ENCODE measurements at regions of chr1 and their contacts with region 1.

Region 1: GRCh38 chr1:31476891-31477828 is 64.1 kb downstream of the SERINC2 start:
- DNase-seq: peak; percentile 77
- ATAC-seq: peak; percentile 89
- H3K4me3 ChIP-seq: no peak overlapping the region
- H3K27ac ChIP-seq: no peak overlapping the region
- H3K4me1 ChIP-seq: no peaks in the 10 kb centered on the region
- H3K27me3 ChIP-seq: no peaks in the 10 kb centered on the region
- CTCF ChIP-seq: no peak
- EP300 ChIP-seq: 0 out of 4 replicates have a peak, but pooled peaks of 1 of the 2 experiments have one; percentile 23
- POLR2A ChIP-seq: no peak
- RAD21 ChIP-seq: no peak

Region 2: DNA sequence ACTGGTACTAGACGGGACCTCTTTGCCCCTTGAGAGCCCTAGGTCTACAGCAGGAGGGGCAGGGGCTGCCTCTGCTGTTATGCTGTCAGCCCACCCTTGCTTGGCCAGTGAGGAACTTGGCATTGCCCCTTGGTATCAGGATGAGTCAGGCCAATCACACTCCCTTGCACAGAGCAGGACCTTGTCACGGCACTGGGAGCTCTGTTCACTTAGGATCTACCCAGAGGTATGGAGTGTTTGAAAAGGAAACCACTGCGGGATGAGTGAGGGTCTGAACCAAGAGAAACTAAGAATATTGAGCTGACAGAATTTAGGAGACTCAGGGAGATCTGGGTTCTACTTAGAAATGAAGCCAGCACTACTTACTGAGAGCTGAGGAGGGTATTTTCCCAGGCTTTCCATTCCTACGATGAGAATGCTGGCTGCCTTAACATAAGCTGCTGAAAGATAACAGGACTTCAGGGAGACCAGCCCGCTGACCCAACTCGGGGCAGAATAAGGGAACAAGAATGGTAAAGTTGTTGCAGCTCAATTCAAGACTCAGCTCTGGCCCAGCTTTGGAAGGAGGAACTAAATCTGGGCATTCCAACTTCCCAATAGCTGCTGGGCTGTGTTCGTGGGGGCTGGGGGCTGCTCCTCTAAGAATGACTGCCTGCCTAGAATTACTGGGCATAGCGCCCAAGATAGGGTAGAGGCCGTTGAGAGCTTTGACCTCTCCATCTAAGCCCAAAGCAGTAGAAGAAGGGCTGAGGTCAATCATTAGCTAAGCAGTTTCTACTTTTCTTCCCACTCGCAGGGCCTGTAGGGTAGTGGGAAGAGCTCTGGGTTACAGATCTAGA is 105.8 kb before region 1 on chr1:
- CTCF ChIA-PET with region 1: no interaction called
- POLR2A ChIA-PET with region 1: no interaction called
- RAD21 ChIA-PET with region 1: no interaction called
- SMC1A ChIA-PET with region 1: no interaction called
- in situ Hi-C with region 1: no loop called
- intact Hi-C with region 1: no loop called
- DNase-seq: no peak
- ATAC-seq: no peak
- H3K4me3 ChIP-seq: no peak overlapping the region
- H3K27ac ChIP-seq: no peak overlapping the region
- H3K4me1 ChIP-seq: no peaks in the 10 kb centered on the region
- H3K27me3 ChIP-seq: no peaks in the 10 kb centered on the region
- CTCF ChIP-seq: no peak
- EP300 ChIP-seq: no peak
- POLR2A ChIP-seq: no peak
- RAD21 ChIP-seq: no peak

Region 3: GRCh38 chr1:31444725-31445448 is 32.3 kb before region 1 on chr1:
- CTCF ChIA-PET with region 1: interaction called, 9 read pairs
- POLR2A ChIA-PET with region 1: no interaction called
- RAD21 ChIA-PET with region 1: interaction called, 14 read pairs
- SMC1A ChIA-PET with region 1: interaction called, 12 read pairs
- in situ Hi-C with region 1: no loop called
- intact Hi-C with region 1: no loop called
- DNase-seq: no peak
- ATAC-seq: no peak
- H3K4me3 ChIP-seq: no peak overlapping the region
- H3K27ac ChIP-seq: no peak overlapping the region
- H3K4me1 ChIP-seq: no peaks in the 10 kb centered on the region
- H3K27me3 ChIP-seq: no peaks in the 10 kb centered on the region
- CTCF ChIP-seq: no peak
- EP300 ChIP-seq: no peak
- POLR2A ChIP-seq: no peak
- RAD21 ChIP-seq: no peak

Region 4: DNA sequence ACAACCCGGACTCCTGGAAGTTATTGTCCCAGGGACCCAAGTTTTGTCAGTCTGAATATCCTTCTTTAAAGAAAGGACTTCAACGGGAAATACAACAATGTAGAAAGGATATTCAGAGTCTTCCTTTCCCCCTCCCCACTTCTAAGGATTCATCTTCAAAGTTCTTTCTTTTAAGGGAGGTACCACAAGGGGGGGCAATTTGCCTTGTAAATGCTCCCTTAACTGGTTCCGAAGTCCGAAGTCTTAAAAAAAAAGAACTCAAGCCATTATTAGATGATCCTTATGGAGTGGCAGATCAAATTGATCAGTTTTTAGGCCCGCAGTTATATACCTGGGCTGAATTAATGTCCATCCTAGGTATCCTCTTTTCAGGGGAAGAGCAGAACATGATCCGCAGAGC is 17.1 kb before region 1 on chr1:
- CTCF ChIA-PET with region 1: interaction called, 14 read pairs
- POLR2A ChIA-PET with region 1: interaction called, 4 read pairs
- RAD21 ChIA-PET with region 1: interaction called, 28 read pairs
- SMC1A ChIA-PET with region 1: interaction called, 27 read pairs
- in situ Hi-C with region 1: no loop called
- intact Hi-C with region 1: no loop called
- DNase-seq: no peak
- ATAC-seq: no peak
- H3K4me3 ChIP-seq: no peak overlapping the region
- H3K27ac ChIP-seq: no peak overlapping the region
- H3K4me1 ChIP-seq: no peaks in the 10 kb centered on the region
- H3K27me3 ChIP-seq: no peaks in the 10 kb centered on the region
- CTCF ChIP-seq: peak in 1 of 3 experiments; percentile 7; a peak in 1 of 6 replicates
- EP300 ChIP-seq: no peak
- POLR2A ChIP-seq: no peak
- RAD21 ChIP-seq: no peak

Region 5: DNA sequence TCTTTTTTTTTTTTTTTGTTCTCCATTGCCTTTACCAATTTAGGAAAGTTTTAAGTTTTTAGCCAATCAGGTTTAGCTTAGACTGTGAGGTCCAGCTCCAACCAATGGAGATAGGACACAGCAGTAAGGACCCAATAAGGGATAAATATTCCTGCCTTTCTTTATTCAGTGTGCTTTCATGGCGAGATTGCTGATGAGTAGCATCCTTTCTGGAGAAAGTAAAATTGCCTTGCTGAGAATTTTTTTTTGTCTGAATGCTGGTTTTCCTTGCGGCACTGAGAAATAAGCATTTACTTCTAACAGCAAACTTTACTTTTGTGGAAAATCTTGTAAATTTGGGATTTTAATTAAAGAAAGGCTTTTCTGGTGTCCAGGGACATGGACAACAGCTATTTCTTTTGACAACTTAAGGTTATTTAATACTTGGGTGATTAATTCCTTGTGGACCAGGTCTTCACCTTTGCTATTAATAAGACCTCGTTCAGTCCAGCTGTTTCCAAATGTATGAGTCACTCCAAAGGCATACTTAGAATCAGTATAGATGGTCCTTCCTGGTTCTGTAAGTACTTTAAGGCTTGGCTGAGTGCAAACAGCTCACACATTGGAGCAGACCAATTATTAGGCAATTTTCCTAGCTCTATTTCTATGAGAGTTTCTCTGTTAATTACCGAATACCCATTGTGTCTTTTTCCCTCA is 10.0 kb before region 1 on chr1:
- CTCF ChIA-PET with region 1: interaction called, 14 read pairs
- POLR2A ChIA-PET with region 1: interaction called, 7 read pairs
- RAD21 ChIA-PET with region 1: interaction called, 28 read pairs
- SMC1A ChIA-PET with region 1: interaction called, 27 read pairs
- in situ Hi-C with region 1: no loop called
- intact Hi-C with region 1: no loop called
- DNase-seq: no peak
- ATAC-seq: no peak
- H3K4me3 ChIP-seq: no peak overlapping the region
- H3K27ac ChIP-seq: no peak overlapping the region
- H3K4me1 ChIP-seq: no peaks in the 10 kb centered on the region
- H3K27me3 ChIP-seq: no peaks in the 10 kb centered on the region
- CTCF ChIP-seq: no peak
- EP300 ChIP-seq: no peak
- POLR2A ChIP-seq: no peak
- RAD21 ChIP-seq: no peak

Measured in GM12878 (cell line).